ENCODE measurements at regions of chr11 and their contacts with region 1.

Region 1: GRCh38 chr11:102390667-102391465 is 43.9 kb downstream of the BIRC2 start:
- DNase-seq: peak; percentile 62 to 76 (median 68)
- ATAC-seq: peak; percentile 93 to 98 (median 96)
- H3K4me3 ChIP-seq: no peak overlapping the region
- H3K27ac ChIP-seq: no peak overlapping the region
- H3K4me1 ChIP-seq: no peaks in the 10 kb centered on the region
- H3K27me3 ChIP-seq: no peaks in the 10 kb centered on the region
- CTCF ChIP-seq: peak; percentile 88 to 92 (median 90)
- POLR2A ChIP-seq: no peak

Region 2: GRCh38 chr11:102495161-102496042 is 104.5 kb after region 1 on chr11:
- intact Hi-C with region 1: loop called in 1 of 2 experiments (anchors 5 kb)
- DNase-seq: peak in 1 of 3 donors; percentile 52
- ATAC-seq: peak; percentile 86 to 94 (median 88)
- H3K4me3 ChIP-seq: no peak overlapping the region
- H3K27ac ChIP-seq: peak overlapping the region in 2 of 3 donors; percentile 1 to 37
- H3K4me1 ChIP-seq: peaks cover 0 to 14% (median 6%) of the 10 kb centered on the region in 4 donors
- H3K27me3 ChIP-seq: no peaks in the 10 kb centered on the region
- CTCF ChIP-seq: peak; percentile 58 to 83 (median 74)
- POLR2A ChIP-seq: no peak